Activated CD4-positive, alpha-beta T cell treated with anti-CD3 and anti-CD28 coated beads, Interleukin-2, amount 10 ng/mL, durations not matched to agents 7 days and 5 days (primary cell): ENCODE measurements at regions of chr1 and their contacts with region 1.

Region 1: DNA sequence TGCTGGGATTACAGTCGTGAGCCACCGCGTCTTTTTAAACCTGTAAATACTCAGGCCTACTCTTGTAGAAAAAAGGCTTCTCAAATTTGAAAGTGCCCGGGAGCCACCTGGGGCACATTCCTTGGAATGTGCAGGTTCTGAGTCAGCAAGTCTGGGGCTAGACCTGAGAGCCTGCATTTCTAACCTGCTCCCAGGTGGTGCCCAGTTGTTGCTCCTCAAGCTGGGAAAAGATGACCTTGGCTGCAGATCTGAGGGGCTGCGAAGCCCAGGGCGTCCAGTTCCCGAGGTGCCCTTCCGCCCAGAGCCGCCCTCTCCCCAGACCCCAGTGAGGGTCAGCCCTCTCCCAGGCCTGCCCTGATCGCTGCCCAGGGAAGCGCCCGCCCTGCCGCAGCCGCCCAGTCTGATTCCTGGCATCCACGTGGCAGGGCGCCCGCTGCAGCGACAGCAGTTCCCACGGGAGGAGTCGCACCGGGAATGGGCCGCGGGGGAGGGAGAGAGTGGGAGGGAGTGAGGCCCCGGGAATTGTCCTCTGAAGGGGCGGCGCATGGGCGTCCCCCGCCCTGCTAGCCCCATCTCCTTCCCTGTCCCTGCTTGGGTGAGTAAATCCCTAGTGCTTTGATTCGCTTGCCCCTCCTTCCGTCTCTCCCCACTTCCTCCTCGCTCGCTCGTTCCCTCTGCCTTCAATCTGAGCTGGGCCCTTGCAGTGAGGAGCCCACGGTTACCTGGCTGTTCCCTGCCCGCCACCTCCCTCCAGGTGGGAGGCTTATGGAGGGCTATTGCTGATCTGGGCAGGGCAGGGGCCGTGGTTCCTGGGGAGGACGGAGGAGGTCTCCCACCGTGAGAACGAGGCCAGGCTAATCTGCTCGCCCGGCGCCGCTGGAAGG is 18.8 kb upstream of the TENT5B start:
- DNase-seq: no peak
- H3K4me3 Mint-ChIP-seq: no peak overlapping the region
- H3K27ac Mint-ChIP-seq: no peak overlapping the region
- H3K4me1 Mint-ChIP-seq: peaks cover 2% of the 10 kb centered on the region
- H3K27me3 Mint-ChIP-seq: peaks cover 3% of the 10 kb centered on the region

Region 2: DNA sequence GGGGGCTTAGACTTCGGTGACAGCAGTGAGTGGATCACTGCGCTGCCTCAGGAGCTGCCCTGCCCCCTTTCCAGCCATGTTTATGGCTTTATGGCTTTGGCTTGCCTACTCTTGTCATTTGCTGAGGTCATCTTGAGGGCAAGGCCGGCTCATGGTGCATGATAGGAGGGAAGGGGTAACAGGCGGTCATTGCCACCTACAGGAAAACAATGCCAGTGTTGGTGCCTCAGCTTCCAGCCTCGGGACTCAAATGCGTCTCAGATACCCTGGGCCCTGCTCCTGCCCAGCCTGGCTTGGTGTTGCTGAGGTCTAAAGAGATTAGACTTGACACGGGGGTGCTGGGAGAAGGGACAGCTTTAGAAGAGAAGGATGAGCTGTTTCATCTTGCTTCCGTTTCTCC is 85.7 kb before region 1 on chr1:
- CTCF ChIA-PET with region 1: no interaction called
- POLR2A ChIA-PET with region 1: interaction called, 10 read pairs
- DNase-seq: no peak
- H3K4me3 Mint-ChIP-seq: no peak overlapping the region
- H3K27ac Mint-ChIP-seq: no peak overlapping the region
- H3K4me1 Mint-ChIP-seq: no peaks in the 10 kb centered on the region
- H3K27me3 Mint-ChIP-seq: no peaks in the 10 kb centered on the region